Activated CD4-positive, alpha-beta T cell treated with anti-CD3 and anti-CD28 coated beads for 36 hours (primary cell): ENCODE measurements at regions of chr22 and their contacts with region 1.

Region 1: DNA sequence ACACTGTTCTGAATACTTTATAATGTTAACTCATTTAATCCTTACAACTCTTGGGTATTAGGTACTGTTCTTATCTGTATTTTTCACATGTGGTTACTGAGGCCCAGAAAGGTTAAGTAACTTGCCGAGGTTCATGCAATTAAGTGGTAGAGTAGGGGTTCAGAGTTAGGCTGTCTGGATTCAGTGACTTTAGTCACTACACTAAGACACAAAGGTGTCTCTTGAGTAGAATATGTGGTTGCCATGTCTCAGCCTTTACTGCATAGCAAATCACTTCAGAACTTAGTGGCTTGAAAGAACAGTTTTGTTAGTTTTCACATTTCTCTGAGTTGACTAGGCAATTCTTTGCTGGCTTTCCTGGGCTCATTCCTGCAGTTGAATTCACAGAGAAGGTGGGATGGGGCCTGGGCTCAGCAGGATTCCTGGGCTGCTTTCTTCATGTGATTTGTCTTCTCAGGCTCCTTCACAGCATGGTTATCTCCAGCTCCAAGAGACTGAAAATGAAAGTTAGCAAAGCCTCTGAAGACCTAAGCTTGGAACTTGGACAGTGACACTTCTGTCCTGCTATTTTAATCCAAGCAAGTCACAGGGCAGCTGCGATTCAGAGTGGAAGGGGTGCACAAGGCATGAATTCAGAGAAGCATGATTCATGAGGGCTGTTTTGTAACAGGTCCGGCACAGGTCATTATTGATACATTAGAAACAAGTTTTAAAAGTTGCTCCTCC is 68.3 kb downstream of the SPECC1L start:
- DNase-seq: no peak
- ATAC-seq: peak; percentile 57
- H3K4me3 Mint-ChIP-seq: no peak overlapping the region
- H3K27ac Mint-ChIP-seq: no peak overlapping the region
- H3K4me1 Mint-ChIP-seq: peaks cover 6% of the 10 kb centered on the region
- H3K27me3 Mint-ChIP-seq: no peaks in the 10 kb centered on the region

Region 2: GRCh38 chr22:24325105-24325757 is 13.7 kb before region 1 on chr22:
- CTCF ChIA-PET with region 1: interaction called, 3 read pairs
- POLR2A ChIA-PET with region 1: interaction called, 10 read pairs
- intact Hi-C with region 1: no loop called
- DNase-seq: peak; percentile 23
- ATAC-seq: peak; percentile 85
- H3K4me3 Mint-ChIP-seq: no peak overlapping the region
- H3K27ac Mint-ChIP-seq: peak overlapping the region; percentile 44
- H3K4me1 Mint-ChIP-seq: peaks cover 35% of the 10 kb centered on the region
- H3K27me3 Mint-ChIP-seq: no peaks in the 10 kb centered on the region

Region 3: DNA sequence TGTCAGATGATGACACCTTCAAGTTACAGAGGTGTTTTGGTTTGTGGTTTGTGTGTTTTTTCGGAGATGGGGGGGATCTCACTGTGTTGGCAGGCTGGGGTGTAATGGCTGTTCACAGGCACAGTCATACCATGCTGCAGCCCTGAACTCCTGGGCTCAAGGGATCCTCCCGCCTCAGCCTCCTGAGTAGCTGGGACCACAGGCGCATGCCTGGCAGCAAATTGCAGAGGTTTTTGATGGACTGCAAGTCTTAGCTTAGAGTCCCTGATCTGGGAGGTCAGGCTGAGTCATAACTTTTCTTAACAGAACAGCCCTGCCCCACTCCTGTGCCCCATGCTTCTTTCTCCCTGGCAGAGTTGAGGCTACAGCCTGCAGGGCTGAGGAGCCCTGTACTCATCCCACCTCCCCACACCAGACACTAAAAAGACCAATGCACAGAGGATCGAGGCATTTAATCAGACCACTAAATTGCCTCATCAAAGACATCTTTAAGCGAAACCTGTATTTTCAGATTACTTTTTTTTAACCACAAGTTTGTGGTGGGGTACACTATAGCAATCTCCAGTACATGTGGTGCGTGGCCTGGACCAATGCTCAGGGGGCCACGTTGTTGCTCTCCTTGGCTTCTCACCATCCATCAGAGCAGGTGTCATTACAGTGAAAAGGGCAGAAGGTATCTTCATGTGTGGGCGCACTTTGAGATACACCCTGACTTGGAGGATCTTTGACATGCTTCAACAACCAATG is 71.4 kb after region 1 on chr22:
- CTCF ChIA-PET with region 1: no interaction called
- POLR2A ChIA-PET with region 1: no interaction called
- intact Hi-C with region 1: loop called in 1 of 2 experiments (anchors 2 kb)
- DNase-seq: peak; percentile 28
- ATAC-seq: peak; percentile 76
- H3K4me3 Mint-ChIP-seq: no peak overlapping the region
- H3K27ac Mint-ChIP-seq: peak overlapping the region; percentile 65
- H3K4me1 Mint-ChIP-seq: peaks cover 33% of the 10 kb centered on the region
- H3K27me3 Mint-ChIP-seq: no peaks in the 10 kb centered on the region

Region 4: DNA sequence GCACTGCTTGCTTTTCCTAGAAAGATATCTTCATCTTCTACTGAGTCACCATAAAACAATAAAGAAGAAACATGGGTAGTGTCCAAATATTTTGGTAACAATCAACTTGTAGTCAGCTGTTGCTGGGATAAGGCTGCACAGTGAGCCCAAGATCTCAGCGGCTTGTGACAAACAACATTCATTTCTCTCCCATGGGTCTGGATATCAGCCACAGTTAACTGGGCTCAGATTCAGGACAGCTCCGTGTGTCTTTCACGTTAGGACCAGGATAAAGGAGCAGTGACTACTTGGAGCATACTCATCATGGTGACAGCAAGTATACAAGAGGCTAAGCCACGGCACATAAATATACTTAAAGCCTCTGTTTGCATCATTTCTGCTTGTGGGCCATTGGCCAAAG is 1197.7 kb after region 1 on chr22:
- CTCF ChIA-PET with region 1: no interaction called
- POLR2A ChIA-PET with region 1: no interaction called
- intact Hi-C with region 1: no loop called
- DNase-seq: no peak
- ATAC-seq: no peak
- H3K4me3 Mint-ChIP-seq: no peak overlapping the region
- H3K27ac Mint-ChIP-seq: no peak overlapping the region
- H3K4me1 Mint-ChIP-seq: no peaks in the 10 kb centered on the region
- H3K27me3 Mint-ChIP-seq: peaks cover 7% of the 10 kb centered on the region